ENCODE measurements at regions of chr6 and their contacts with region 1.

Region 1: GRCh38 chr6:4906293-4907276 is 97.3 kb downstream of the RPP40 start:
- DNase-seq: peak in 1 of 2 experiments; percentile 32
- H3K4me3 ChIP-seq: no peak overlapping the region
- H3K27ac ChIP-seq: no peak overlapping the region
- H3K4me1 ChIP-seq: peaks cover 0 to 15% (median 9%) of the 10 kb centered on the region in 4 experiments; a peak in 6 of 7 replicates
- H3K27me3 ChIP-seq: no peaks in the 10 kb centered on the region
- CTCF ChIP-seq: no peak
- EP300 ChIP-seq: no peak
- POLR2A ChIP-seq: no peak
- RAD21 ChIP-seq: no peak

Region 2: GRCh38 chr6:4957521-4958231 is 51.1 kb after region 1 on chr6:
- CTCF ChIA-PET with region 1: interaction called, 10 read pairs
- POLR2A ChIA-PET with region 1: no interaction called
- DNase-seq: no peak
- H3K4me3 ChIP-seq: no peak overlapping the region
- H3K27ac ChIP-seq: no peak overlapping the region
- H3K4me1 ChIP-seq: no peaks in the 10 kb centered on the region; a peak in 3 of 7 replicates
- H3K27me3 ChIP-seq: no peaks in the 10 kb centered on the region
- CTCF ChIP-seq: peak; percentile 21 to 65 (median 31)
- EP300 ChIP-seq: no peak
- POLR2A ChIP-seq: peak; percentile 19 to 58
- RAD21 ChIP-seq: peak; percentile 49 to 59

Measured in H1 (cell line).